ENCODE measurements at regions of chr10 and their contacts with region 1.

Region 1: GRCh38 chr10:78672918-78673317 is 395.8 kb upstream of the ZMIZ1 start:
- DNase-seq: no peak
- H3K4me3 ChIP-seq: no peak overlapping the region
- H3K27ac ChIP-seq: no peak overlapping the region
- H3K4me1 ChIP-seq: peaks cover 0 to 5% of the 10 kb centered on the region in 2 experiments; a peak in 1 of 4 replicates
- H3K27me3 ChIP-seq: no peaks in the 10 kb centered on the region
- CTCF ChIP-seq: no peak
- EP300 ChIP-seq: no peak
- RAD21 ChIP-seq: no peak

Region 2: DNA sequence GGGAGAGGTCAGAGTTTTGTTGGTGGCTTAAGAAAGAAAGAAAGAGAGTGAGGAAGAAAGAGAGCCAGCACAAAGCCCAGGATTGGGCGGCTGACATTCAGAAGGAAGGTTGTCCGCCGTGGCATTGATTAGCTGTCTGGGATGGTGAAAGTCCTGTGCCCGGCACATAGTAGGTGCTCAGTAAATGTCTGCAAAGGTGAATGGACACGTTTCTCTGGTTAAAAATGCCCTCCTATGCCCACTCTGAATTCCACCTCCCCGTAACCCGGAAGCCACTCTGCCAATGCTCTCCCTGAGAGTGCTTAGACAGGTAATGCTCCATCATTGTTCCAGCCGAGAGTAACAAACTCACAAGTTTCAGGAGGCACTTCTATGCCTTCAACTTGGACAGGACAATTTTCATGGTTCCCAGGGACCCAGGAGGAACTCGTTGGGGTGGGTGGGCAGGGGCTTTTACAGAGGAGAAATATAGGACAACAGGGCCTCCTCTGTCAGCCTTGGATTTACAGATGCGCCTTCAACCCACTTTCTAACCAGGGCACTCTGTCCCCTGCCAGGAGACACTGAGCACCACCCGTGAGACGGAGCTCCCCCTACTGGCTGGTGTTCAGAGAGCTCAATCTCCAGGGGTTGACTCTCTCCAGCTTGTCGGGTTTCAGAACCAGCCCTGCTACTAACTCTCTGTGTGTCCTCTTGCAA is 15.6 kb before region 1 on chr10:
- CTCF ChIA-PET with region 1: interaction called, 12 read pairs
- POLR2A ChIA-PET with region 1: no interaction called
- DNase-seq: peak; percentile 60
- H3K4me3 ChIP-seq: no peak overlapping the region
- H3K27ac ChIP-seq: peak overlapping the region; percentile 12 to 99; a peak in 3 of 4 replicates
- H3K4me1 ChIP-seq: peaks cover 0 to 37% of the 10 kb centered on the region in 2 experiments; a peak in 2 of 4 replicates
- H3K27me3 ChIP-seq: no peaks in the 10 kb centered on the region
- CTCF ChIP-seq: peak; percentile 62
- EP300 ChIP-seq: no peak
- RAD21 ChIP-seq: peak; percentile 72

Region 3: GRCh38 chr10:78817361-78817760 is 144.4 kb after region 1 on chr10:
- CTCF ChIA-PET with region 1: no interaction called
- POLR2A ChIA-PET with region 1: no interaction called
- DNase-seq: no peak
- H3K4me3 ChIP-seq: no peak overlapping the region
- H3K27ac ChIP-seq: no peak overlapping the region
- H3K4me1 ChIP-seq: peaks cover 0 to 11% of the 10 kb centered on the region in 2 experiments; a peak in 1 of 4 replicates
- H3K27me3 ChIP-seq: no peaks in the 10 kb centered on the region
- CTCF ChIP-seq: no peak
- EP300 ChIP-seq: no peak
- RAD21 ChIP-seq: no peak

Measured in SK-N-SH (cell line).